ENCODE measurements at regions of chr2 and their contacts with region 1.

Region 1: DNA sequence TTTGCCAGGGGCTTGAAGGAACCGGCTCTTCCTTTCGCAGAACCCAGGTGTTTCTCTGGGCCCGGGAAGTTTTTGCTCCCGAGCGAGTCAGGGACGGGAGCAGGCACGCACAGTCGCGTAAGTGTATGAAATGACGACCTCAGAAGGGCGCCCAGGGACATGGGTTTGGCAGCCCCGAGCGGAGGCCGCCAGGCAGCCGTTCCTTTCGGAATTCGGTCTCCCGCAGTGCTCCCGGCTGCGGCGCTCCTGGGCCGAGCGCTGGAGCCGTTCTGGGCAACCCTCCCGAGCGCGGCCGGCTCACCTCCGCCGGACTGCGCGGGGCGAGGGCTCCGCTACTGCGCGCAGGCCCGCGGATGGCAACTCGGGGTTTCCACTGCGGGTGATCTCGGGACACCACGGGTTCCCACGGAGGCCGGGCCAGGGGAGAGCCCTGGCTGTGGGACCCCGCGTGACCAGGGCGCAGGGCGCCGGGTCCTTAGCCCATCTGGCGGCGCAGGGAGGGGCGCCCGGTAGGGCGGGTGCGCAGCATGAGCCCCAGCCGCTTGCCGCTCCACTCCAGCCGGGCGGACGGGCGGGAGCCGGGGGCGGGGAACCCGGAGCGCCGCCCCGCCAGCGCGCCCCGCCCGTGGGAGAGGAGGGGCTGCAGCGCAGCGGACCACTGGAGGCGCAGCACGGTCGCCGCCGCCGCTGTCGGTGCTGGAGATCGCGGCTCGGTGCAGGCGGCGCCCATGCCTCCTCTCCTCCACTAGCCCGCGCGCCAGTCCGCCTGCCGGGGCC is at the start of gene OSBPL6:
- DNase-seq: peak; percentile 91
- ATAC-seq: peak; percentile 98
- total RNA-seq, gene OSBPL6: 3.4 TPM

Region 2: DNA sequence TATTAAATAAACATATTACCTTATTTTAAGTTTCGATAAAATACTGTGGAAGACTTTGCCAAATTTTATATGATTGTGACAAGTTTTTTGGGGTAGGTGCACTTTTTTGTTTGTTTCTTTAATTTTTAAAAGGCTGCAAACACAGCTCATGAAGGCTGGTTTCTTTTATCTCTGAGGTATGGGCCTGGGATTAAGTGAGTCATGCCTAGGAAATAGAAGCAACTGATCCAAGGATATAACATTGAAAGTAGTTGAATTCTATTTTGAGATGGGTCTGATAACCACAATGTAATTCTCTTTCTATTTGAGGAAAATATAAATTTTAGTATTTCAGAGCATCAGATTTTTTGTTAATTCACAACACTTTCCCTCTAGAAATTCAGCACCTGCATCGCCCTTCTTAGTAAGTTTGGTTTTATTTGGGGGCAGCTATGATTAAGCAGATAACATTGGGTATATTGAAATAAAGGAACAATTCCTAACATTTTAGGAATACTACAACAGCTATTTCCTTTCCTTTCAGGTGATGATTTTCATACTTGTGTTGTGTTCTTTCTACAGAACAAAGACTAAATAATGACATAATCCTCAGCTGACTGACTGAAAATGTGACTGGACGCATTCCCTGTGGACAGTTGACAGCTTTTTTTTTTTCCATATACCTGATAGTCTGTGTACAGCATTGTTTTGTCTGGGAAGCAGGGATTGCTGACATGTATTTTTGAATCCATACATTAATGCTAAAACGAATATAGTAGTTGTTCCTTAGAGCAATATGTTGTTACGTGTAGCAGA is 65.0 kb before region 1 on chr2:
- intact Hi-C with region 1: loop called (anchors 5 kb)
- DNase-seq: no peak
- ATAC-seq: no peak

Region 3: DNA sequence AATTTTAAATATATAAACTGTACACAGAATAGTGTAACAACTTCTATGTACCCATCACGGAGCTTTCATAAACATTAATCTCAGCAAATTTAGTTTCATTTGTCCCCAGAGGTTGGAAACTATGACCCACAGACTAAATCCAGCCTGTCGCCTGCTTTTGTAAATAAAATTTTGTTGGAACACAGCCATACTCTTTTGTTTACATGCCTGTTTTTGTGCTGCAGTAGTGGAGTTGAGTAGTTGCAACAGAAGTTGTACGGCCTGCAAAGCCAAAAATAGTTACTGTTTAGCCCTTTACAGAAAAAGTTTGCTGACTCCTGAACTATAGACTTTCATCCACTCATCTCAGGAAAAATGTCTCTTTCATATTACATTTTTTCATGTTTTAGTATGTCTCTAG is 42.0 kb before region 1 on chr2:
- intact Hi-C with region 1: loop called (anchors 5 kb)
- DNase-seq: no peak
- ATAC-seq: no peak

Region 4: DNA sequence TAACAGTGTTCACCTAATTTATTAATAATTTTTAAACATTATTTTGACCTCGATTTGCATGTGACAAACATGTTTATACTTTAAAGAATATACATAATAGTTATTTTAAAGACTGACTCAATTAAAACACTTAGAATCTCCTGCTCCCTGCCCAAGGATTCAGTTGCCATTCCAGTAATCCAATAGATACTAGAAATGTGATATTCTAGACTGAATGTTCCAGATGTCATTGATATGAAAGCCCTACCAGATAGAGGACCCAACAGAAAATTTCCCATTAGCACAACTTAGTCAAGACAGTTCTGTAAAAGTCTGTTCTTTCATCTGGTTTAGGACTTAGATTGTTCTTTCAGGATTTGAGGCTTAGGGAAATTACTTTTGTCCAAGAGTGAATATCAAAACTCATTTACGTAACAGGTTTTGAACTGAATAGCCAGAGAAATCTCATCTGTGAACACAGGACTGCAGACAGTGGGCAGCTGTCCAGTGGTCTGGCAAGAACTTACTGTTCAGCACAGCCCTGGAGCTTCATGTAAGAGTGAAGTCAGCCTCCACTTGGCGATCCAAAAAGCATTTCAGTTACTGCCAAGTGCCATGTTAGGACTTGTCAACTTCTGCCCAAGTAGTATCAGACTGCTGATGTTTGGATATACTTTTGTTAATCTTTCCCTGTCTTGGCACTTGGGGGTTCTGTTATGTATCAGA is 77.8 kb after region 1 on chr2:
- intact Hi-C with region 1: loop called (anchors 2 kb)
- DNase-seq: peak; percentile 88
- ATAC-seq: peak; percentile 96

Region 5: DNA sequence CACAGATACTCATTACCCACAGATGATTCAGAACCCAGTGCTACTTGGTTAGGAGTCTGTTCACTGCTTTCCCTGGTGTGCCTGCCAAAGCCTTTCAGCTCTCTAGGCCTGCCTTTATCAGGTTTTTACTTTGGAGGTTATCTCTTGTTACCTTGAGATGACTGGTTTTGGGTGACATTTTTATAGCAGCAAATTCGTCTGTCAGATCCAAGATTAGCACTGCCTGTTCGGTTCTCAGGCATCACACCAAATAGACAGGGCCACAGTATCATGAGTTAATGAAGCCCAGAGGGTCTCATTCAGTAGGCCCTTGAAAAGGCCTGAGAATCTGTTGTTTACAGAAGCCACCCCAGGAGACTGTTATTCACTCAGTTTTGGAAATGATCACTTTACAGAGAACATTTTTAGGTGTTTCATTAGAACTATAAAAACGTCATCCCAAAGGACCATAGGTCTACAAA is 121.5 kb after region 1 on chr2:
- intact Hi-C with region 1: no loop called
- DNase-seq: no peak
- ATAC-seq: no peak